ENCODE measurements at regions of chr5 and their contacts with region 1.

Region 1: GRCh38 chr5:127865273-127865672 is 162.1 kb downstream of the CCDC192 start:
- DNase-seq: no peak
- H3K4me3 ChIP-seq: no peak overlapping the region
- H3K27ac ChIP-seq: no peak overlapping the region
- H3K4me1 ChIP-seq: no peaks in the 10 kb centered on the region; the same call in 1 of the 2 replicates
- H3K27me3 ChIP-seq: no peaks in the 10 kb centered on the region
- CTCF ChIP-seq: no peak

Region 2: GRCh38 chr5:128271873-128272446 is 406.7 kb after region 1 on chr5:
- CTCF ChIA-PET with region 1: no interaction called
- POLR2A ChIA-PET with region 1: no interaction called
- intact Hi-C with region 1: no loop called
- DNase-seq: peak; percentile 21 to 79
- H3K4me3 ChIP-seq: no peak overlapping the region
- H3K27ac ChIP-seq: no peak overlapping the region
- H3K4me1 ChIP-seq: peaks cover 15% of the 10 kb centered on the region; the same call in 1 of the 2 replicates
- H3K27me3 ChIP-seq: no peaks in the 10 kb centered on the region
- CTCF ChIP-seq: no peak

Region 3: DNA sequence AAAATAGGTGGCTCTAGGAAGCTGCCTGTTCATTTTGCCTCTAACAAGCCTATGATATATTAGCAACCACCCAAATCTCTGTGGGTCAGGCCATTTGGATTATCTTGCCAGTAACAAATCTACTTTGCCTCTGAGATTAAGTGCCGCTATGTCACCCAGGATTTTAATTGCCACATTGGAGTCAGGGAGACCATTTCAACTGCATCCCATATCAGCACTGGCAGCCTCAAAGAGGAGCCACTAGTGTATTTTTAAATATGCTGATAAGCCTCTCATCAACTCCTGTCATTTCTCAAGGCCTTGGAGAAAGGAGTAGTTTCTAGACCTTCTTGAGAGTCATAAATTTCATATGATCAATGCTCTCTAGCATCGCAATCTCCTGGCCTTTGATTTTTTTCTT is 1582.7 kb after region 1 on chr5:
- CTCF ChIA-PET with region 1: interaction called, 23 read pairs
- POLR2A ChIA-PET with region 1: no interaction called
- intact Hi-C with region 1: no loop called
- DNase-seq: no peak
- H3K4me3 ChIP-seq: no peak overlapping the region
- H3K27ac ChIP-seq: no peak overlapping the region
- H3K4me1 ChIP-seq: no peaks in the 10 kb centered on the region
- H3K27me3 ChIP-seq: no peaks in the 10 kb centered on the region
- CTCF ChIP-seq: no peak